Activated T-helper 2 cell treated with anti-CD3 and anti-CD28 coated beads, Interferon-gamma antibody, Interleukin-2, Interleukin-4, amounts not matched to agents 10 μg/mL and 5 μg/mL and 100 μg/mL, durations not matched to agents 14 hours and 24 hours and 36 hours (primary cell): ENCODE measurements at regions of chr5 and their contacts with region 1.

Region 1: DNA sequence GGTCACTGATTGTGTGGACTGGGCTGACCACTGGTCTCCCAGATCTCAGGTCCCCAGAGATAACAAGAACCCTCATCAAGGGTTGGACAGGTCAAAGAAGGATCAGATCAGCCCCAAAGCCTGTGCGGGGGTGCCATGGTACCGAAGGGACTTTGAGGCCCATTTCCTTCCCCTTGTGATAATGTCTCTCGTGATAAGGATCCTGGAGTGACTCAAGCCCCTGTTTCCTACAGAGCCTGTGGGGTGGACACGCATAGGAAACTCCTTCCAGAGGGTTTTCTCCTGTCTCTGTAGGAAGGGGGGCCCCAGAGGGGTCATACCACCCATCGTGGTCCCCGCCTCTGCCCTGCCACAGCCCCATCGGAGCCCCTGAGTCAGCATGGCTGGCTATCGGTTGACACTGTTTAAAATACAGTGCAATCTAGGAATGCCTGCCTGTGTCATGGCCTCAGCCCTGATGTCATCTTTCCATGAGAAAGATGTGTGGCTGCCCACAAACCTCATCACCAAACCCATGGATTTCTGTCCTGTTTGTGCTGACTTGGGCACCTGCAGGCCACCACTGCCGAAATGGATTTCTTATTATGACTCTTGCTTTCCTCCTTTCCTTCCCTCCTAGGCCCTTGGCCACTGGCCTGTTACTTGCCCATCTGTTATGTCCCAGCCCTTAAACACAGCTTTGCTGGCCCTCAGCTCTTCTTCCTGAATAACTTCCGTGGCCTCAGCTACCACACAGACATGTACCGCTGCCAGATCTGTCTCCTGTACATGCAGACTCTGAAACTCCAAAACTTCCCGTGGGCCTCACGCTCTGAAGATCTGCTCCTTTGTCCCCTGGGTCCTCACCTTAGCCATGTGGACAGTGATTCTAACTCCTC is 2.9 kb upstream of the CSF2 start:
- DNase-seq: no peak
- H3K4me3 Mint-ChIP-seq: peak overlapping the region; percentile 54
- H3K27ac Mint-ChIP-seq: peak overlapping the region; percentile 89
- H3K4me1 Mint-ChIP-seq: peaks cover 68% of the 10 kb centered on the region
- H3K27me3 Mint-ChIP-seq: no peaks in the 10 kb centered on the region

Region 2: DNA sequence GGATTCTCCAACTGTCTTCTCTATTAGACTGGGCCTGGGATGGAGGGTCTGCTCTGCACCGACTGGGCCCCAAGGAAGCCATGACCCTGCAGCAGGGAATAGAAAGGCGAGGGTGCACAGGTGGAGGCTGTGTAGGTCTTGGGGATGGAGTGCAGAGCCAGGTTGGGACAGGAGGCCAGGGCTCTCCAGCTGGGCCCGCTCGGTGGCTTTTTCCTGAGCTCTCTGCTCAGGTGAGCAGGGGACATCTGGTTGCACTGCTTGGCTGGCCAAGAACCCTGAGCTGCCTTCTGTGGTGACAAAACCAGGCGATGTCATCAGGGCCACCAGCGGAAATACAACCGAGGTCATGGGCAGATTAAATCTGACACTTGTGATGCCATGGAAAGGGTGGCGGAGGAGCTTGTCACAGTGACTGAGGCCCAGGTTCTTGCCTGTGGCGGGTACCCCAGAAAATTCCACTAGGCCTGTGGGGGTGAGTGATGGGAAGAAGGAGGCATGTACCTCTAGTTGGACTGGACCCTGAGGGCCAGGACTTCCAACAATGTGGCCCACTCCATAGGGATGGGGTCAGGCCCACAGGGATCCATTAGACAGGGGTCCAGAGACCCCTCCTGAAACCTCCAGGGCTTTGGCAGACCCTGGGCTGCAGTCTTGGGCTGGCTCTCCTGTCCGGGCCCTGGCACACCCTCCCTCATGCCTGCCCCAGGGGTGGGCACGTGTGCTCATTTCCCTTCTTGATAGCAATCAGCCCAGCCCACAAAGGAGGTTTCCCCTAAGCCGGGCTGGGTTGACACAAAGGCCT is 14.7 kb before region 1 on chr5:
- intact Hi-C with region 1: no loop called
- DNase-seq: peak; percentile 56
- H3K4me3 Mint-ChIP-seq: no peak overlapping the region
- H3K27ac Mint-ChIP-seq: peak overlapping the region; percentile 86
- H3K4me1 Mint-ChIP-seq: peaks cover 61% of the 10 kb centered on the region
- H3K27me3 Mint-ChIP-seq: peaks cover 2% of the 10 kb centered on the region

Region 3: DNA sequence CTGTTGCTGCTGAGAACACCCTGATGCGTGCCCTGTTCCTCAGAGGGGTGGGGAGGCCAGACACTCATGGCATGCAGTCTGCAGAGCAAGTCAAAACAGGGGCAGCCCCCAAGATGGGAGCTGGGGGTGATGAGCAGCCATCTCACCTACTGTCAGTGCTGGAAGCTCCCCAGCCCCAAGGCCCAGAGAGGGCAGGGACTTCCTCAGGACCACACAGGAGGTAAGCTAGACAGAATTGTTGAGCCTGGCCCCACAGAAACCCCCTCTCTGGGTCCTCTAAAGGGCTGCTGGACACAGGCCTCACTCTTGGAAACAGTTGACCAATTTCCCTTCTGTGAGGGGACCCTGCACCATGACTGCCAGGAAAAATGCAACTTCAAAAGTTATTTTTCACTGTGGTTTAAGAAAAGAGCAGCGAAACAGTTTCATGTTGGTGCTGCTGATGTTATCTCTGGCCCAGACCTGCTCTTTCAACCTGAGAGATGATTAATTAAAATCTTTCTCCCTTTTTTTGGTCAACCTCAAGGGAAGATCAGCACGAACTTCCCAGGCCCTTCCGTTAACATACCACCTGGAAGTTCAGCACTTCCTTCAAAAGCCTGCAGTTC is 12.5 kb after region 1 on chr5:
- intact Hi-C with region 1: loop called (anchors 1 kb)
- DNase-seq: no peak
- H3K4me3 Mint-ChIP-seq: no peak overlapping the region
- H3K27ac Mint-ChIP-seq: peak overlapping the region; percentile 76
- H3K4me1 Mint-ChIP-seq: peaks cover 74% of the 10 kb centered on the region
- H3K27me3 Mint-ChIP-seq: no peaks in the 10 kb centered on the region

Region 4: DNA sequence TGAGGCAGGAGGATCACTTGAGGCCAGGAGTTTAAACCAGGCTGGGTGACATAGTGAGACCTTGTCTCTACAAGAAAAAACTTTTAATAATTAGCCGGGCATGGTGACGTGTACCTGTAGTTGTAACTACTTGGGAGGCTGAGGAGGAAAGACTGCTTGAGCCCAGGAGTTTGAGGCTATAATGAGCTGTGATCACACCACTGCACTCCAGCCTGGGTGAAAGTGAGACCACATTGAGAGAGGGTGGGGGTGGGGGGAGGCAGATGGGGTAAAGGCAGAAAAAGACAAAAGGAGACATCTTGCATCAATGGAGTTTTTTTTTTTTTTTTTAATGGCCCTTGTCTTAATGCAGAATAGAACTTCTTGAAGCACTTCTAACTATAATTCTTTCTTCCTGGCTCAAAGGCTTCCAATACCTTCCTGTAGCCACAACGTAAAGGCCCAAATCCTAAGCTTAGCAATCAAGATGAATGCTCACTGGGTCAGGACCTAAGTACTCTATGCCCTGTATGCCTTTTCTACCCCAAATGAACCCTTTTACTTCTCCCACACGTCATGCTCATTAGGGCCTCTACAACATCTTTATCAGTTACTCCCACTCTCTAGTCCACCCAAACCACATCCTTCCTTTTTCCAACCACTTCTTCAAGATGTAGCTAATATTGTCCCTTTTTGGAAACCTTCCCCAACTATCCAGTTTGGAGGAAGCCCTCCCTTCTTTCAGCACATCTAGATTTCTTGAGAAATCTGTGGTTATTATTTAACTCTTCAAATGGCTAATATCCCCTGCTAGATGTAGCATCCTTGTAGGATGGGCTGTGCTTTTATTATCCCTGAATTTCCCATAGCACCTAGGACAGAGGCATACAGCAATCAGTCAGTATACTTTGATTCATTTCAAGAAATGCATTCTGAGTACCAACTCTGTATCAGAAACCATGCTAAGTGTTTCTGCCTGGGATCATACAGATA is 43.7 kb after region 1 on chr5:
- intact Hi-C with region 1: loop called (anchors 1 kb)
- DNase-seq: no peak
- H3K4me3 Mint-ChIP-seq: peak overlapping the region; percentile 0
- H3K27ac Mint-ChIP-seq: peak overlapping the region; percentile 49
- H3K4me1 Mint-ChIP-seq: peaks cover 58% of the 10 kb centered on the region
- H3K27me3 Mint-ChIP-seq: no peaks in the 10 kb centered on the region

Region 5: DNA sequence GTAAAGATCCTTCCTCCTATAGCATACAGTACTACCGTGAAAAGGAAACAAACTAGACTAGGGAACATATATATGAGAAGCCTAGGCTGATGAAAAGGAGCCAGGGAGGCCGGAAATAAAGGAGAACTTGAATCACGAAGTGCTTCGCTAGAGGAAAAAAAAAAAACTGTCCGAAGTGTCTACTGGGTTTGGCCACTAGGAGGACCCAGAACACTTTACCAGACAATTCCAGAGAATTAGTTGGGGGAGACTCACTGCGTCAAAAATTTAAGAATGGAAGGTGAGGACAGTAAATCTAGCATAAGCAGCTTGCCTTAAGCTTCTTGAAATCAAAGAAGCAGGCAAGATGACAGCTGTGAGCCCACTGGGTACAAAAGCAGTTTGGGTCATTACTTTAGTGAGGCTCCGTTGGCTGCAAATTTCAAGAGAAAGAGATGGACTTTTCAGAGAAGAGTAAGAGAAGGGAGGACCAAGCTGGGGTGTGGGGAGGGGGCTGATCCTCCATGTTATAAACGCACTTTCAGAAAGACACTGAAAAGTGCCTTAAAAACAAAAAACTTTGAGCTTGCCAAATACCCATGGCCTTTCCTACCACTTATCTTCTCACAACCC is 109.5 kb after region 1 on chr5:
- intact Hi-C with region 1: loop called (anchors 1 kb)
- DNase-seq: no peak
- H3K4me3 Mint-ChIP-seq: peak overlapping the region; percentile 19
- H3K27ac Mint-ChIP-seq: peak overlapping the region; percentile 85
- H3K4me1 Mint-ChIP-seq: peaks cover 44% of the 10 kb centered on the region
- H3K27me3 Mint-ChIP-seq: no peaks in the 10 kb centered on the region